WTC11 (cell line): ENCODE measurements at regions of chr10 and their contacts with region 1.

Region 1: DNA sequence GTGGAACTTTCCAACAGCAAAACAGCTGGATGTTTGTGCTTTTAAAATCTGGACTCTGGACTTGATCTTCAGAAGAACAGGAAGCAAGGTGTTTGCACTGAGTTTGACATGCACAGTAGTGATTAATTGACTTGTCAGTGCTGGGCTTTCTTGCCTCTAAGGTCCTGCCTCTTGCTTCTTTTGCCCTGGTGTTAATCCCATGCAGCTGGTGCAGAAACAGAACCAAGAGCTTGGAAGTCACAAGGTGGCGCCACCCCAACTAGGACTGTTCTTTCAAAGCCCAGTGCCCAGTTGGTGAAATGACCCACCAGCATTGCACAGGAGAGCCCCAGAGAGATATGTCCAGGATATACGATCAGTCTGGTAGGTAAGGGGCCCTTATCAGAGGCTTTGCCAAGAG is 66.8 kb upstream of the SEPHS1 start:
- DNase-seq: peak; percentile 62
- ATAC-seq: peak; percentile 92
- H3K4me3 Mint-ChIP-seq: no peak overlapping the region
- H3K27ac Mint-ChIP-seq: no peak overlapping the region
- H3K4me1 Mint-ChIP-seq: no peaks in the 10 kb centered on the region
- H3K27me3 Mint-ChIP-seq: peaks cover 7% of the 10 kb centered on the region
- CTCF ChIP-seq: no peak

Region 2: GRCh38 chr10:13518076-13518692 is 103.3 kb after region 1 on chr10:
- CTCF ChIA-PET with region 1: interaction called, 10 read pairs
- POLR2A ChIA-PET with region 1: no interaction called
- DNase-seq: peak; percentile 70
- ATAC-seq: peak; percentile 90
- H3K4me3 Mint-ChIP-seq: no peak overlapping the region
- H3K27ac Mint-ChIP-seq: no peak overlapping the region; the same call in 1 of the 2 replicates
- H3K4me1 Mint-ChIP-seq: peaks cover 13% of the 10 kb centered on the region
- H3K27me3 Mint-ChIP-seq: no peaks in the 10 kb centered on the region
- CTCF ChIP-seq: no peak